IMR-90 (cell line): ENCODE measurements at regions of chr3 and their contacts with region 1.

Region 1: DNA sequence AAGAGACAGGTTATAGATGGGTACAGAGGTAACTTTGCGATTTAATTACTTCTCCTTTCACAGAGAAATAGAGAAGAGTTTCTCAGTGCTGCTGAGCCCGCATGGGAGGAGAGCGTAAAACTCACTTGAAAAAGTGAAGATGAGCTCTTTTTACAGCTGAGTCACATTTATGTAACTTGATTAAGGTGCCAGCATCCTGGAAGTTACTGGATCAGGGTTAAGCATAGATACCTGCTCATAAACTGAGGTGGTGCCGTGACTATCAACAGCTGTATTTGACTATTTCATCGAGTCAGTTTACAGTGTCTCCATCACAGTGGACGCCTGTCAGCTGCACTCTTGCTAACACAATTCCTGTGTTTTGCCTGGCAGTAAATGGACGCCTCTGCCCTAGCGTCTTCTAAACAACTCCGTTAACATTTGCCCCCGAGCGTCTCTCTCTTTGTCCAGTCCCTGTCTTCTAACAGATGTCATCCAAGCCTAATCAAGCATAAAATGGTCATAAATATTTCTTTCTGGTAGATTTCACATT is 414.6 kb downstream of the FOXP1 start:
- DNase-seq: peak; percentile 44
- ATAC-seq: peak; percentile 35; the same call in 1 of the 2 replicates
- H3K4me3 ChIP-seq: no peak overlapping the region
- H3K27ac ChIP-seq: peak overlapping the region; percentile 69; the same call in 1 of the 2 replicates
- H3K4me1 ChIP-seq: peaks cover 22% of the 10 kb centered on the region
- H3K27me3 ChIP-seq: no peaks in the 10 kb centered on the region
- CTCF ChIP-seq: no peak
- POLR2A ChIP-seq: no peak
- RAD21 ChIP-seq: no peak

Region 2: DNA sequence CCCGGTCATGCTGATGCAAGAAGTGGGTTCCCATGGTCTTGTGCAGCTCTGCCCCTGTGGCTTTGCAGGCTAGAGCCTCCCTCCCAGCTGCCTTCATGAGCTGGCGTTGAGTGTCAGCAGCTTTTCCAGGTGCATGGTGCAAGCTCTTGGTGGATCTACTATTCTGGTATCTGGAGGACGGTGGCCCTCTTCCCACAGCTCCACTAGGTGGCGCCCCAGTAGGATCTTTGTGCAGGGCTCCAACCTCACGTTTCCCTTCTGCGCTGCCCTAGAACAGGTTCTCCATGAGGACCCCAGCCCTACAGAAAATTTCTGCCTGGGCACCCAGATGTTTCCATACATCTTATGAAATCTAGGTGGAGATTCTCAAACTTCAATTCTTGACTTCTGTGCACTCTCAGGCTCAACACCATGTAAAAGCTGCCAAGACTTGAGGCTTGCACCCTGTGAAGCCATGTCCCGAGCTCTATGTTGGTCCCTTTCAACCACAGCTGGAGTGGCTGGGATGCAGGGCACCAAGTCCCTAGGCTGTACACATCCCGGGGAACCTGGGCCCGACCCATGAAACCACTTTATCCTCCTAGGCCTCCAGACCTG is 618.1 kb before region 1 on chr3:
- CTCF ChIA-PET with region 1: no interaction called
- POLR2A ChIA-PET with region 1: no interaction called
- dilution Hi-C with region 1: no loop called
- in situ Hi-C with region 1: no loop called
- intact Hi-C with region 1: loop called (anchors 5 kb)
- DNase-seq: peak; percentile 54
- ATAC-seq: peak; percentile 93
- H3K4me3 ChIP-seq: no peak overlapping the region
- H3K27ac ChIP-seq: no peak overlapping the region
- H3K4me1 ChIP-seq: no peaks in the 10 kb centered on the region
- H3K27me3 ChIP-seq: peaks cover 5% of the 10 kb centered on the region; the same call in 1 of the 2 replicates
- CTCF ChIP-seq: peak; percentile 67
- POLR2A ChIP-seq: no peak
- RAD21 ChIP-seq: peak; percentile 79

Region 3: DNA sequence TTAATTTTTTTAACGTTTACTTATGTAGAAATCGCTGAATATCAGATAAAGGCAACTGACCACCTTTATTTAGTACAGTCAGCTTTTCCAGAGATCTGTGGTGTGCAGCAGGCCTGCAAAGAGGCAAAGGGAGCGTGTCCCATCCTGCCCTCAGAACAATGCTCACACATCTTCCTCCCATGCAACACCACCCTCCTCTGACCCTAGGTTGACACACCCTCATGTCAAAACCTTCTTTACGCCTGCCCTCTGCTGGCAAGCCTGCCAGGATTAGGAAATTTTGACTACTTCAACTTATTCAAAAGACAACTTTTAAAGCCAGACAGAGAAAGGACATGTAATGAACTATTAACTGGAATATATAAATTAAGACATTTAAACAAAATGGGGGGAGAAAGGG is 99.1 kb before region 1 on chr3:
- CTCF ChIA-PET with region 1: no interaction called
- POLR2A ChIA-PET with region 1: no interaction called
- dilution Hi-C with region 1: no loop called
- in situ Hi-C with region 1: no loop called
- intact Hi-C with region 1: loop called (anchors 5 kb)
- DNase-seq: no peak
- ATAC-seq: no peak
- H3K4me3 ChIP-seq: no peak overlapping the region
- H3K27ac ChIP-seq: no peak overlapping the region
- H3K4me1 ChIP-seq: peaks cover 20% of the 10 kb centered on the region
- H3K27me3 ChIP-seq: no peaks in the 10 kb centered on the region
- CTCF ChIP-seq: peak; percentile 21; the same call in 1 of the 2 replicates
- POLR2A ChIP-seq: no peak
- RAD21 ChIP-seq: peak; percentile 40

Region 4: GRCh38 chr3:71111784-71112440 is 57.0 kb before region 1 on chr3:
- CTCF ChIA-PET with region 1: no interaction called
- POLR2A ChIA-PET with region 1: no interaction called
- dilution Hi-C with region 1: no loop called
- in situ Hi-C with region 1: no loop called
- intact Hi-C with region 1: no loop called
- DNase-seq: peak; percentile 97
- ATAC-seq: peak; percentile 49
- H3K4me3 ChIP-seq: no peak overlapping the region
- H3K27ac ChIP-seq: peak overlapping the region; percentile 85; the same call in 1 of the 2 replicates
- H3K4me1 ChIP-seq: peaks cover 14% of the 10 kb centered on the region
- H3K27me3 ChIP-seq: no peaks in the 10 kb centered on the region
- CTCF ChIP-seq: no peak
- POLR2A ChIP-seq: no peak
- RAD21 ChIP-seq: peak; percentile 31

Region 5: GRCh38 chr3:71247221-71247976 is 78.5 kb after region 1 on chr3:
- CTCF ChIA-PET with region 1: interaction called, 4 read pairs
- POLR2A ChIA-PET with region 1: no interaction called
- dilution Hi-C with region 1: no loop called
- in situ Hi-C with region 1: no loop called
- intact Hi-C with region 1: loop called (anchors 2 kb)
- DNase-seq: peak; percentile 67
- ATAC-seq: 0 out of 2 replicates have a peak, but pooled peaks have one; percentile 8
- H3K4me3 ChIP-seq: no peak overlapping the region
- H3K27ac ChIP-seq: 0 out of 2 replicates have a peak overlapping the region, but pooled peaks have one; percentile 1
- H3K4me1 ChIP-seq: peaks cover 23% of the 10 kb centered on the region
- H3K27me3 ChIP-seq: no peaks in the 10 kb centered on the region
- CTCF ChIP-seq: no peak
- POLR2A ChIP-seq: no peak
- RAD21 ChIP-seq: no peak